GM12878 (cell line): ENCODE measurements at regions of chr2 and their contacts with region 1.

Region 1: DNA sequence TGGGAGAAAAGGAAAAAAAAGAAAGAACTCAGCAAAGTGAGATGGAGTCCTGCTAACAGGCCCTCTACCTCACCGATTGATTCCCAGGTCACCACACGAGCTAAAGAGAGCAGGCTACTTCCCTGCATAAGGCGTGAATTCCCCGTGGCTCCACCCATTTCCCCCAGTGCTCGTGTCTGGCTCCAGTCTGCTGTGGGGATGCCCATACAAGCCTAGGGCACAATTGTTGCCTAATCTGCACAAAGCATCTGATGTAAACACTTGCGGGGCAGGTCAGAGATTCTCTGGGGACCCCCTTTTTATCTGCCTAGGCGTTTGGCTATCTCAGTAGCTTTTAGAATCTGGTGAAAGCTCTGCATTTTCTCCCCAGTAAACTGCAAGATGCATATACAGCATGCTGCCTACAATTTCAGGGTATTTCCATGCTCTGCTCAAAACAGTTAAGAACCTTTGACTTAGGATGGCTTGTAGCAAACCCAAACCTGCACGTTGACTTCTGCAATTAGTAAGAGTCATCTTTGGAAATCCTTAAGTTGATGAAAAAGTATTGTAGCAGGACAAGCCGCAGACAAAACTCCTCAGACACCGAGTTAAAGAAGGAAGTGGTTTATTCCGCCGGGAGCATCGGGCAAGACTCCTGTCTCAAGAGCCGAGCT is 34.8 kb downstream of the MYO3B start:
- DNase-seq: peak; percentile 64
- ATAC-seq: peak; percentile 72
- H3K4me3 ChIP-seq: peak overlapping the region; percentile 42
- H3K27ac ChIP-seq: peak overlapping the region; percentile 51
- H3K4me1 ChIP-seq: peaks cover 24% of the 10 kb centered on the region
- H3K27me3 ChIP-seq: no peaks in the 10 kb centered on the region
- CTCF ChIP-seq: no peak
- EP300 ChIP-seq: no peak
- POLR2A ChIP-seq: no peak
- RAD21 ChIP-seq: no peak

Region 2: GRCh38 chr2:170098626-170099312 is 114.0 kb before region 1 on chr2:
- CTCF ChIA-PET with region 1: no interaction called
- POLR2A ChIA-PET with region 1: no interaction called
- RAD21 ChIA-PET with region 1: no interaction called
- SMC1A ChIA-PET with region 1: interaction called, 5 read pairs
- in situ Hi-C with region 1: no loop called
- intact Hi-C with region 1: loop called (anchors 10 kb)
- DNase-seq: no peak
- ATAC-seq: peak; percentile 92
- H3K4me3 ChIP-seq: no peak overlapping the region
- H3K27ac ChIP-seq: no peak overlapping the region
- H3K4me1 ChIP-seq: 0 out of 2 replicates have a peak, but pooled peaks cover 2% of the 10 kb centered on the region
- H3K27me3 ChIP-seq: no peaks in the 10 kb centered on the region
- CTCF ChIP-seq: no peak
- EP300 ChIP-seq: no peak
- POLR2A ChIP-seq: no peak
- RAD21 ChIP-seq: no peak